K562 (cell line): ENCODE measurements at regions of chr2 and their contacts with region 1.

Region 1: GRCh38 chr2:121897335-121897970 is 142.0 kb downstream of the TSN start:
- DNase-seq: peak; percentile 63 to 69 (median 66)
- ATAC-seq: peak; percentile 89
- H3K4me3 ChIP-seq: no peak overlapping the region
- H3K27ac ChIP-seq: no peak overlapping the region
- H3K4me1 ChIP-seq: peaks cover 17% of the 10 kb centered on the region in 2 experiments; a peak in 4 of 5 replicates
- H3K27me3 ChIP-seq: peaks cover 0 to 8% of the 10 kb centered on the region in 2 experiments; a peak in 2 of 5 replicates
- CTCF ChIP-seq: peak; percentile 69 to 73 (median 71)
- EP300 ChIP-seq: no peak
- POLR2A ChIP-seq: no peak
- RAD21 ChIP-seq: peak; percentile 30 to 58; a peak in 3 of 4 replicates

Region 2: GRCh38 chr2:121722479-121722878 is 175.0 kb before region 1 on chr2:
- CTCF ChIA-PET with region 1: no interaction called
- POLR2A ChIA-PET with region 1: no interaction called
- in situ Hi-C with region 1: no loop called
- intact Hi-C with region 1: no loop called
- DNase-seq: peak in 2 of 4 experiments; percentile 62 to 63
- ATAC-seq: peak; percentile 74
- H3K4me3 ChIP-seq: no peak overlapping the region
- H3K27ac ChIP-seq: no peak overlapping the region
- H3K4me1 ChIP-seq: peaks cover 6 to 16% of the 10 kb centered on the region in 2 experiments; a peak in 4 of 5 replicates
- H3K27me3 ChIP-seq: no peaks in the 10 kb centered on the region
- CTCF ChIP-seq: no peak
- EP300 ChIP-seq: no peak
- POLR2A ChIP-seq: no peak
- RAD21 ChIP-seq: 0 out of 4 replicates have a peak, but pooled peaks of 1 of the 2 experiments have one; percentile 21

Region 3: DNA sequence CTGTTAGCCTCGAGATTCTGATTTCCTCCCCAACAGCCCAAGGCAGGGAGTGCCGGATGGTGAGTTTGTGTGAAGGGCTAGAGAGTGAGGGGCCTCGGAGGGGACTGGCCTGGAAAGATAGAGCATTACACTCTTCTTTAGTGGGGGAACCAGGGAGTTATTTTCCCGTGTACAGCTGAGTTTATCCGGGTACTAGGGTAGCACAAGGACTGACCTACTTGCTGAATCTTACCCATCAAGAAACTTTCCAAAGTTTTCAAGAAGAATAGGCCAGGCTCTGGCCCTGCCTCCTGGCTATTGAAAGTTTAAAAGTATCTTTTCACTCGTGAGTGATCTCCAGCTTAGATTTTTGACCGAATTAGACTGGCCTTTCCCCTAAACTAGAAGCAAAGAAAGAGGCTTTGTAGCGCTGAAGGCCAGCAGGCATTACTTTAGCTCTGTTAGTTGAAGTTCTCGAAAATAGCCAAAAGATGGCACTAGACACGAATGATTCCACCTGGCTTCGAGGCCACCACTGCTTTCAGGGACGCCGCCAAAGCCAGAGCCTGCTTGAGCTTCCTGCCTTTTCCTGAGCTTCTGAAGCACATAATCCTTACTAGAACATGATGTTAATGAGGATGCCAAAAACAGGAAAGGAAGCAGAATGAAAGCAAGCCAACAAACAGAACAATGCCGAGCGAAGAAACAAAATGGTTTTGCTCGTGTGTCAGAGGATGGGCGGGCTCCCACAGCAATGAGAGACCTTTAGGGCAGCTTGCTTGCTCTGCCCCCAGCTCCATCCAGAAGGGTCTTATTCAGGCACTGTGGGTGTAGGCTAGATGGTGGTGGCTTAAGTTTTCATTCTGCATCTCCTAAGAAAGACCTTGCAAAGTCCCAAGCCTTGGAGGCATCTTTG is 86.2 kb before region 1 on chr2:
- CTCF ChIA-PET with region 1: no interaction called
- POLR2A ChIA-PET with region 1: no interaction called
- in situ Hi-C with region 1: no loop called
- intact Hi-C with region 1: loop called (anchors 1 kb)
- DNase-seq: peak; percentile 21 to 64 (median 34)
- ATAC-seq: peak; percentile 97
- H3K4me3 ChIP-seq: no peak overlapping the region
- H3K27ac ChIP-seq: no peak overlapping the region
- H3K4me1 ChIP-seq: no peaks in the 10 kb centered on the region; a peak in 1 of 5 replicates
- H3K27me3 ChIP-seq: peaks cover 11 to 41% of the 10 kb centered on the region in 2 experiments; a peak in 4 of 5 replicates
- CTCF ChIP-seq: peak; percentile 67 to 72 (median 70)
- EP300 ChIP-seq: no peak
- POLR2A ChIP-seq: no peak
- RAD21 ChIP-seq: peak; percentile 73 to 82